CD4-positive, alpha-beta T cell (primary cell): ENCODE measurements at regions of chr1 and their contacts with region 1.

Region 1: DNA sequence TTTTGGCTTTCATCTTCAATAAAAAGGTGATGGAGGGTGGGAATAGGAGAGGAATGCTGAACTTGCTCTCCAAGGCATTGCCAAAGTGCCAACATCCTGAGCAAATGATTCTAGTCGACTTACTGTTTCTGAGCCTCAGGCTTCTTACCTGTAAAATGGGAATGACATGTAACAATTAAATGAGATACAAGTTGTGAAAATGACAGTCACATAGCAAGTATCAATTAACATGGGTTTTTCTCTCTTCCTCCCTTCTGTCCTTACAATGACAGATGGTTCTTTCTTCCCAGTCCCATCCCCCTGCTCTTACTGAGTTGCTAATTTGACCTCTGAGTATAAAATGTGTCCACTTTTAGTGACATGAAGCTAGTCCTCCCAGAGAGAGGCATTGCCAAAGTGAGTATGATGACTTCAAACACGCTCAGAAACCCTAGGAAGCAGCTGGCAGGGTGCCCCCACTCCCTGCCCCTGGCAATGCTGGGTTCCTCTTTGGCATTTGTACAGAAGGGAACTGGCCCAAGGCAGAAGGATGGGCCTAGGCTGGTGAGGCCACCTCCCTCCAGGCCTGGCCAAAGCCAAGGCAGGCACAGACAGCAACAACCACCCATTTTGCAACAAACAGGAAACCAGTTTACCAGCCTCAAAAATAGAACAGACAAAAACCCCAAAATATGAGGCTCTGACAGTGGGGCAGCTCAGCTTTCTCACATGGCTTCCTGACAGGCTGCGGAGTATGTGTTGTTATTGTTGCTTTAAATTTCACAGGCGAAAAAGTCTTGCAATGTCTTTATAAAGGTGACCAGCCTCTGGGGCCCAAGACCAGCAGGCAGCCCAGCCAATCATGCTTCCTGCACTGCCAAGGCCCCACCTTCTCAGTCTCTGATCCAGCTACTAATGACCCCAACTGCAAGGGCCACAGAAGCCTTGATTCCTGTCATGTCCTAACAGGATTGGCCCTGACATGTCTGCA is 115.9 kb downstream of the HIVEP3 start:
- DNase-seq: peak in 12 of 14 experiments; percentile 12 to 77 (median 23)
- ATAC-seq: peak; percentile 65
- H3K4me3 ChIP-seq: no peak overlapping the region
- H3K4me3 Mint-ChIP-seq: peak overlapping the region; percentile 54
- H3K27ac ChIP-seq: peak overlapping the region; percentile 44 to 77
- H3K27ac Mint-ChIP-seq: peak overlapping the region; percentile 90
- H3K4me1 ChIP-seq: peaks cover 84% of the 10 kb centered on the region
- H3K4me1 Mint-ChIP-seq: peaks cover 78% of the 10 kb centered on the region
- H3K27me3 ChIP-seq: no peaks in the 10 kb centered on the region
- H3K27me3 Mint-ChIP-seq: no peaks in the 10 kb centered on the region
- CTCF ChIP-seq: no peak

Region 2: GRCh38 chr1:41650028-41650880 is 152.6 kb before region 1 on chr1:
- CTCF ChIA-PET with region 1: no interaction called
- POLR2A ChIA-PET with region 1: no interaction called
- intact Hi-C with region 1: no loop called
- DNase-seq: peak in 5 of 14 experiments; percentile 19 to 60 (median 51)
- ATAC-seq: peak; percentile 69
- H3K4me3 ChIP-seq: no peak overlapping the region
- H3K4me3 Mint-ChIP-seq: no peak overlapping the region
- H3K27ac ChIP-seq: no peak overlapping the region
- H3K27ac Mint-ChIP-seq: peak overlapping the region; percentile 14
- H3K4me1 ChIP-seq: peaks cover 15% of the 10 kb centered on the region
- H3K4me1 Mint-ChIP-seq: peaks cover 34% of the 10 kb centered on the region
- H3K27me3 ChIP-seq: no peaks in the 10 kb centered on the region
- H3K27me3 Mint-ChIP-seq: no peaks in the 10 kb centered on the region
- CTCF ChIP-seq: no peak

Region 3: DNA sequence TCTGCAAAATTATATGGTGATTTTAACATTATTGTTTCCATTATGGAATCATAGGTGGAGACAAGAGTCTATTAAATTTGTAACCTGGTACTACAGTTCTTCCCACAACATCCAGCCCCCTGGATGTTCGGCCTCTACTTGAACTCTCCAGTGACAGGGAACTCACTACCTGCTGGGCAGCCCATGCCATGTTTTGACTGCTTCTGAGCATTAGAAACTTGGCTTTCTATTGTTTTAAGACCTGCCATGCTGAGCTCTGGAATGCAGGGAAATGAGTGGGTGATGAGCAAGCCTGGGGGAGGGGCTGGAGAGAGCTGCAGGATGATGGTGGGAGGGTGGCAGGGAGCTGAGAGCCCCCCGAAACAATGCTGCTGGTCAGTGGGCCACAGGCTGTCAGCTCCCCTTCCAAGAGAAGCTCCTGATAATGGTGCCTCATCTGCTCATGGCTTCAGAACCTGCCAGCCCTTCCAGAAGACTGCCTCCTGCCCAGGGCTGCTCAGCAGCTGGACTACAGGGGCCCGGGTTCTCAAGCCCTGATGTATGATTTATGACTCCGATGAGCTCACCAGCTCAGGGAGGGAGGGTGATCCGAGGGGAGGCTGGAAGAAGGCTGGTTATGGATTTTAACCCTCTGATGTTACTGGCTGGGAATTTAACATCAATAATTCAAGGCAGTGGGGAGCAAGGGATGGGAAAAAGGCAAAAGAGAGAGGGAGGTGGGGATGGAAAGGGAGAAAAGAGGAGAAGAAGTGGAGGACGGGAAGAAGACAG is 89.1 kb before region 1 on chr1:
- CTCF ChIA-PET with region 1: no interaction called
- POLR2A ChIA-PET with region 1: no interaction called
- intact Hi-C with region 1: no loop called
- DNase-seq: no peak
- ATAC-seq: no peak
- H3K4me3 ChIP-seq: no peak overlapping the region
- H3K4me3 Mint-ChIP-seq: no peak overlapping the region
- H3K27ac ChIP-seq: no peak overlapping the region
- H3K27ac Mint-ChIP-seq: no peak overlapping the region
- H3K4me1 ChIP-seq: peaks cover 10% of the 10 kb centered on the region
- H3K4me1 Mint-ChIP-seq: no peaks in the 10 kb centered on the region
- H3K27me3 ChIP-seq: no peaks in the 10 kb centered on the region
- H3K27me3 Mint-ChIP-seq: no peaks in the 10 kb centered on the region
- CTCF ChIP-seq: no peak

Region 4: DNA sequence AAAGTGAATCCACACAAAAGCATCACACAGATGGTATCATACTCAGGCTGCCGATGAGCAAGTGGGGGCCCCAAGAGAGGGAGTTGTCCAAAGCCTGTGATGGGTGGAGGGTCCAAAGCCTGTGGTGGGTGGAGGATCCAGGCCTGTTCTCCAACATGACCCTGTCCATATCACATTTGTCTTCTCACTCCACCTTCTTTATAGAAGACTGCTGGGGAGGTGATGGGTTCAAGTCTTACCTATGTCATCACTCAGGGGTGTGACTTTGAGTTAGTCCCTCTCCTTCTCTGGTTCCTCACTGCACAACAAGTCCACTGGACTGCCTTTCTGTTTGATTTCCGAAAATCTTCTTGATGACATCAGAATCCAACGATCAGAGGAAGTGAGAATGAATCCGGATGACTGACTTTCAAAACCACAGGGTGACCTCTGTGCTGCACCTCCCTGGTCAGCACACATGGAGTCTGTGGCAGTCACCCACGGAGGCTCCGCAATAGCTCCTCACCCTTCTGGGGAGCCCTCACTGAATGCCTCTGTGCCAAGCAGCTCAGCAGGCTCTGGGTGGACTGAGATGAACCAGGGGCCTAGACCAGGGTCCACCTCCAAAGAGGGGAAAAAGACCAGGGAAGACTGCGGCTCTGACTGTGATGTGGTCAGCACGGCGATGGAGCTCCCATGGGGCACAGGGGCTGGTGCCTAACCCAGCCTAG is 50.9 kb before region 1 on chr1:
- CTCF ChIA-PET with region 1: no interaction called
- POLR2A ChIA-PET with region 1: interaction called, 3 read pairs
- intact Hi-C with region 1: loop called in 1 of 2 experiments (anchors 10 kb)
- DNase-seq: peak in 3 of 14 experiments; percentile 33 to 70 (median 61)
- ATAC-seq: no peak
- H3K4me3 ChIP-seq: no peak overlapping the region
- H3K4me3 Mint-ChIP-seq: no peak overlapping the region
- H3K27ac ChIP-seq: no peak overlapping the region
- H3K27ac Mint-ChIP-seq: no peak overlapping the region
- H3K4me1 ChIP-seq: peaks cover 46% of the 10 kb centered on the region
- H3K4me1 Mint-ChIP-seq: peaks cover 46% of the 10 kb centered on the region
- H3K27me3 ChIP-seq: no peaks in the 10 kb centered on the region
- H3K27me3 Mint-ChIP-seq: no peaks in the 10 kb centered on the region
- CTCF ChIP-seq: no peak